Panc1 (cell line): ENCODE measurements at regions of chr9 and their contacts with region 1.

Region 1: GRCh38 chr9:37994639-37995347 is 74.2 kb downstream of the SHB start:
- DNase-seq: no peak
- ATAC-seq: peak; percentile 34
- H3K4me3 ChIP-seq: no peak overlapping the region
- H3K27ac ChIP-seq: peak overlapping the region; percentile 20; the same call in 1 of the 2 replicates
- H3K4me1 ChIP-seq: peaks cover 33% of the 10 kb centered on the region
- H3K27me3 ChIP-seq: no peaks in the 10 kb centered on the region
- CTCF ChIP-seq: no peak

Region 2: GRCh38 chr9:37963936-37964739 is 30.7 kb before region 1 on chr9:
- CTCF ChIA-PET with region 1: no interaction called
- POLR2A ChIA-PET with region 1: no interaction called
- in situ Hi-C with region 1: no loop called
- intact Hi-C with region 1: loop called (anchors 5 kb)
- DNase-seq: no peak
- ATAC-seq: peak; percentile 69
- H3K4me3 ChIP-seq: no peak overlapping the region; a peak in 1 of 4 replicates
- H3K27ac ChIP-seq: peak overlapping the region; percentile 57
- H3K4me1 ChIP-seq: peaks cover 48% of the 10 kb centered on the region
- H3K27me3 ChIP-seq: no peaks in the 10 kb centered on the region
- CTCF ChIP-seq: no peak